Ovary (tissue), 10 donors: ENCODE measurements at regions of chr11 and their contacts with region 1.

Region 1: GRCh38 chr11:60077981-60078380 is 10.5 kb upstream of the MS4A2 start:
- DNase-seq: no peak
- H3K4me3 ChIP-seq: no peak overlapping the region
- H3K27ac ChIP-seq: no peak overlapping the region
- H3K4me1 ChIP-seq: no peaks in the 10 kb centered on the region
- H3K27me3 ChIP-seq: no peaks in the 10 kb centered on the region
- CTCF ChIP-seq: no peak
- EP300 ChIP-seq: no peak
- POLR2A ChIP-seq: no peak

Region 2: GRCh38 chr11:58394195-58394594 is 1683.8 kb before region 1 on chr11:
- intact Hi-C with region 1: loop called in 1 of 4 experiments (anchors 5 kb)
- DNase-seq: no peak
- H3K4me3 ChIP-seq: no peak overlapping the region
- H3K27ac ChIP-seq: no peak overlapping the region
- H3K4me1 ChIP-seq: no peaks in the 10 kb centered on the region
- H3K27me3 ChIP-seq: no peaks in the 10 kb centered on the region
- CTCF ChIP-seq: no peak
- EP300 ChIP-seq: no peak
- POLR2A ChIP-seq: no peak

Region 3: GRCh38 chr11:60111793-60112192 is 33.8 kb after region 1 on chr11:
- intact Hi-C with region 1: loop called in 1 of 4 experiments (anchors 1 kb)
- DNase-seq: no peak
- H3K4me3 ChIP-seq: no peak overlapping the region
- H3K27ac ChIP-seq: no peak overlapping the region
- H3K4me1 ChIP-seq: peaks cover 13% of the 10 kb centered on the region
- H3K27me3 ChIP-seq: no peaks in the 10 kb centered on the region
- CTCF ChIP-seq: no peak
- EP300 ChIP-seq: no peak
- POLR2A ChIP-seq: no peak

Region 4: DNA sequence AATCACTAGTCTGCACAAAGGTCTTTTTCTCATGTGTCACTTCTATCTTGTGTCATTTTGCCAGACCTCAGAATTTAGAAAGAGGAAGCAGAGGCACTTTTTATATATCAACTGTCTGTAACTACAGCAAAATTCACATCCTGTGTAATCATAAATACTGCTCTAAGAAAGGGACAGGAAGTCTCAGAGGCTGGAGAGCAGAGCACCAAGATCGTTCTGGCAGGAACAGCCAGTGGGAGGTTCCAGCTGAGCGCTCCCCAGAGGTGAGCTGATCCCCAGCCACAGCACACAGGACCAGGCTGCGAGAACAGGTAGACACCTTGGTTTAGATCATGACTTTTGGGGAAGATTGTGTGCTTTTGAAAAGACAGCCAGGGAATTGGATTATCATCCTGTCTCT is 300.4 kb after region 1 on chr11 and contains the start of gene MS4A7:
- intact Hi-C with region 1: no loop called
- DNase-seq: no peak
- H3K4me3 ChIP-seq: no peak within 1 kb of the TSS
- H3K27ac ChIP-seq: no peak within 1 kb of the TSS
- H3K4me1 ChIP-seq: no peaks in the 10 kb centered on the region
- H3K27me3 ChIP-seq: no peaks in the 10 kb centered on the region
- CTCF ChIP-seq: no peak
- EP300 ChIP-seq: no peak
- POLR2A ChIP-seq: no peak
- total RNA-seq, gene MS4A7: 5.9 to 30.1 (median 11.6) TPM